Uterus (tissue), 4 donors: ENCODE measurements at regions of chrX and their contacts with region 1.

Region 1: GRCh38 chrX:15349046-15349445 is 13.7 kb upstream of the PIGA start:
- DNase-seq: peak in 1 of 2 donors; percentile 52
- H3K4me3 ChIP-seq: no peak overlapping the region
- H3K27ac ChIP-seq: no peak overlapping the region
- H3K4me1 ChIP-seq: no peaks in the 10 kb centered on the region
- H3K27me3 ChIP-seq: no peaks in the 10 kb centered on the region
- CTCF ChIP-seq: peak; percentile 45 to 66 (median 55)
- POLR2A ChIP-seq: no peak

Region 2: DNA sequence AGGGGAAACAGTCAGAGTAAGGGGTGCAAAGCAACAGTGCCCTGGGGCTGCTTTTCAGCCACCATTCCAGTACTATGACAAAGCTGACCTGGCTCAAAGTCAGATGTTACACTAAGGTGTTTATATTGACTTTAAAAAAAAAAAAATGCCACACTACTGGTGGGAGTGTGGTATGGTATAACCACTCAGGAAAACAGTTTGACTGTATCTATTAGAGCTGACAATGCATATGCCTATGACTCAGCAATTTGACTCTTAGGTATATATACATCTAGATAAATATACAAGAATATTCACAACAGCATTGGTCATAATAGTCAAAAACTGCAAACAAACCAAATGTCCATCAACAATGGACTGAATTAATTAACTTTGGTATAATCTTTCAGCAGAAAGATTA is 94.2 kb before region 1 on chrX:
- intact Hi-C with region 1: no loop called
- DNase-seq: no peak
- H3K4me3 ChIP-seq: no peak overlapping the region
- H3K27ac ChIP-seq: no peak overlapping the region
- H3K4me1 ChIP-seq: no peaks in the 10 kb centered on the region
- H3K27me3 ChIP-seq: no peaks in the 10 kb centered on the region
- CTCF ChIP-seq: no peak
- POLR2A ChIP-seq: no peak

Region 3: DNA sequence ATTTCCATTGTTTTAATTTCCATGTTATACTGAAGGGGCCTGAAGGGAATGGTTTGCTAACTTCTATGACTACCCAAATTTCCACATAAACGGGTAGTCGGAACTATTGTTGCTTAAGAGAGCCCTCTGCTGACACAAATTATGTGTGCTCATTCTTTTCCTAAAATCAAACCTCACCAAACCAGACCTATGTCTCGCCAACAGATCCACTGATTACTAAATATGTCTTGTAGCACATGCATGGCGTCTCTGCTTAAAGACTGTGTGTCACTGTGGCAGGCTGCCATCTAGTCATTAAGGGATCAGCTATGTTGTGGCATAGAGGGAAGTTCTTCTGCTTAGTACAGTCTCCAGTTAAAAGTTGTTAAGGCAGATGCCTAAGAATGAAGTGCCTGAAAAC is 119.0 kb after region 1 on chrX:
- intact Hi-C with region 1: loop called (anchors 10 kb)
- DNase-seq: peak in 1 of 2 donors; percentile 35
- H3K4me3 ChIP-seq: no peak overlapping the region
- H3K27ac ChIP-seq: peak overlapping the region in 1 of 2 donors; percentile 25
- H3K4me1 ChIP-seq: no peaks in the 10 kb centered on the region
- H3K27me3 ChIP-seq: peaks cover 0 to 5% of the 10 kb centered on the region in 2 donors
- CTCF ChIP-seq: peak; percentile 32 to 66 (median 47)
- POLR2A ChIP-seq: no peak